Prostate gland (tissue), 2 donors: ENCODE measurements at regions of chrX and their contacts with region 1.

Region 1: GRCh38 chrX:13750204-13750603 is 15.7 kb downstream of the OFD1 start:
- DNase-seq: peak; percentile 39
- H3K4me3 ChIP-seq: no peak overlapping the region
- H3K27ac ChIP-seq: peak overlapping the region in 1 of 2 donors; percentile 48
- H3K4me1 ChIP-seq: no peaks in the 10 kb centered on the region
- H3K27me3 ChIP-seq: no peaks in the 10 kb centered on the region
- CTCF ChIP-seq: peak; percentile 19 to 72 (median 48)
- POLR2A ChIP-seq: no peak

Region 2: DNA sequence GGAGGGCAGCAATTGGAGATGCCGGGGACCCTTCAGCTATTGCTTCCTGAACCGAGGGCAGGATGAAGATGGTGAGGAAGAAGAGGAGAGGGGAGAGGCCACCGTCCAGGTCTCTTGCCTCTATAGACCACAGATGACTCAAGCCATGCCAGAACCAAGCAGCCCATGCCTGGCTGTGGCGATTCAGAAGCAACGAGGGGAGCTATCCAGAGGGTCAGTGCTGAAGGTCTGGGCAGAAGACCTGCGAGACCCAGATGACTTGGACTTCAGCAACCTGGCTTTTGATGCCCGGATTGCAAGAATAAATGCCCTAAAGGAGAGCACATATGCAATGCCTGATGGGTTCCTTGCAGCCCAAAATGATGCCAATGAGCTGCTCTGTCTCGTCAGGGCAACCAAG is 1029.2 kb before region 1 on chrX:
- intact Hi-C with region 1: no loop called
- DNase-seq: no peak
- H3K4me3 ChIP-seq: no peak overlapping the region
- H3K27ac ChIP-seq: no peak overlapping the region
- H3K4me1 ChIP-seq: no peaks in the 10 kb centered on the region
- H3K27me3 ChIP-seq: no peaks in the 10 kb centered on the region
- CTCF ChIP-seq: no peak
- POLR2A ChIP-seq: no peak

Region 3: GRCh38 chrX:13658602-13659001 is 91.6 kb before region 1 on chrX:
- intact Hi-C with region 1: loop called (anchors 5 kb)
- DNase-seq: peak; percentile 31
- H3K4me3 ChIP-seq: no peak overlapping the region
- H3K27ac ChIP-seq: no peak overlapping the region
- H3K4me1 ChIP-seq: no peaks in the 10 kb centered on the region
- H3K27me3 ChIP-seq: no peaks in the 10 kb centered on the region
- CTCF ChIP-seq: peak; percentile 35 to 81 (median 61)
- POLR2A ChIP-seq: no peak